ENCODE measurements at regions of chr21 and their contacts with region 1.

Region 1: DNA sequence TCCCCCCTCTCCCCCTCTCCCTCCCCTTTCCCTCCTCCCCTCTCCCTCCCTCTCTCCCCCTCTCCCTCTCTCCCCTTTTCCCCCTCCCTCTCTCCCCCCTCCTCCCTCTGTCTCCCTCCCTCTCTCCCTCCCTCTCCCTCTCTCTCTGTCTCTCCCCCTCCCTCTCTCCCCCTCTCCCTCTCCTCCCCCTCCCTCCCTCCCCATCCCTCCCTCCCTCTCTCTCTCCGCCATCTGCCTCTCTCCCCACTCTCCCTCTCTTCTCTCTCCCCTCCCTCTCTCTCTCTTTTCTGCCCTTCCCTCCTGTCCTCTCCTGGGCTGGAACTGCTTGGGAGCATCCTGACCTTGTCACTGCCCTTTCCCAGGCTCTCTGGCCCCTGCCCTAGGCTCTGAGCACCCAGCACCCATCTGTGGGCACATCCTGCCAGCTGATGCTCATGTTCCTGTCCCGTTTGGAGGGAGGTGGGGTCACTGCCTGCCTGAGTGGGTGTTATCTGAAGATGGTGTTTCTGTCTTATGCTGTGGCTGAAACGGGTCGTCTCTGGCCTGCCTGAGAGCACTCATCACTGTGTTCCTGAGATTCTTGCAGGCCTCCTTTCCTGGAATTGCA is 10.8 kb downstream of the FTCD start:
- DNase-seq: no peak
- H3K4me3 ChIP-seq: no peak overlapping the region
- H3K27ac ChIP-seq: no peak overlapping the region
- H3K4me1 ChIP-seq: peaks cover 4% of the 10 kb centered on the region
- H3K27me3 ChIP-seq: no peaks in the 10 kb centered on the region
- CTCF ChIP-seq: no peak

Region 2: DNA sequence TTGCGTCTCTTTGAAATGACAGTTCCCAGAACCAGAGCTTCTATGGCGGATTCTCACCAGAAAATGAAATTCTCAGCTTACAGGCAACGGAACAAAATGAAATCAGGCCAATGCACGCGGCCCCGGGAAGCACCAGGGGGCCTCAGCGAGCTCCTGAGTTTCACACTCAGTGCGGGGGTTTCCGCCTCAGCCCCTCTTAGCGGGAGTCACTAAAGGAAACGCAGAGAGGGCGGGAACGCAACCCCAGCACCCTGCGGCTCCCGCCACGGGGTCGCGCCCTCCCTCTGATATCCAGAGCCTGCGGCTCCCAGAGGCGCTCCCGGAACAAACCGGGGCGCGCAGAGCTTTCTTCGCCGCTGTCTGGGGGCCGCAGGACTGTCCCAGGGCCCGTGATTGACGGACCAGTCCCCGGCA is 170.9 kb before region 1 on chr21:
- CTCF ChIA-PET with region 1: no interaction called
- dilution Hi-C with region 1: no loop called
- in situ Hi-C with region 1: no loop called
- intact Hi-C with region 1: loop called (anchors 1 kb)
- DNase-seq: peak; percentile 24
- H3K4me3 ChIP-seq: peak overlapping the region; percentile 31 to 47 (median 46)
- H3K27ac ChIP-seq: no peak overlapping the region
- H3K4me1 ChIP-seq: peaks cover 26% of the 10 kb centered on the region
- H3K27me3 ChIP-seq: peaks cover 2% of the 10 kb centered on the region
- CTCF ChIP-seq: peak; percentile 63 to 75

Region 3: GRCh38 chr21:46188359-46189109 is 44.0 kb after region 1 on chr21:
- CTCF ChIA-PET with region 1: no interaction called
- dilution Hi-C with region 1: no loop called
- in situ Hi-C with region 1: no loop called
- intact Hi-C with region 1: no loop called
- DNase-seq: peak; percentile 50
- H3K4me3 ChIP-seq: no peak overlapping the region
- H3K27ac ChIP-seq: peak overlapping the region; percentile 54
- H3K4me1 ChIP-seq: peaks cover 34% of the 10 kb centered on the region
- H3K27me3 ChIP-seq: no peaks in the 10 kb centered on the region
- CTCF ChIP-seq: no peak

Region 4: GRCh38 chr21:46228345-46229051 is 83.9 kb after region 1 on chr21 and contains the start of gene LSS:
- CTCF ChIA-PET with region 1: interaction called, 4 read pairs
- dilution Hi-C with region 1: no loop called
- in situ Hi-C with region 1: no loop called
- intact Hi-C with region 1: loop called (anchors 1 kb)
- DNase-seq: peak; percentile 96
- H3K4me3 ChIP-seq: peak within 1 kb of the TSS; percentile 93 to 94 (median 94)
- H3K27ac ChIP-seq: peak within 1 kb of the TSS; percentile 87
- H3K4me1 ChIP-seq: peaks cover 25% of the 10 kb centered on the region
- H3K27me3 ChIP-seq: no peaks in the 10 kb centered on the region
- CTCF ChIP-seq: no peak
- total RNA-seq, gene LSS: 69.2 to 126 TPM

Region 5: DNA sequence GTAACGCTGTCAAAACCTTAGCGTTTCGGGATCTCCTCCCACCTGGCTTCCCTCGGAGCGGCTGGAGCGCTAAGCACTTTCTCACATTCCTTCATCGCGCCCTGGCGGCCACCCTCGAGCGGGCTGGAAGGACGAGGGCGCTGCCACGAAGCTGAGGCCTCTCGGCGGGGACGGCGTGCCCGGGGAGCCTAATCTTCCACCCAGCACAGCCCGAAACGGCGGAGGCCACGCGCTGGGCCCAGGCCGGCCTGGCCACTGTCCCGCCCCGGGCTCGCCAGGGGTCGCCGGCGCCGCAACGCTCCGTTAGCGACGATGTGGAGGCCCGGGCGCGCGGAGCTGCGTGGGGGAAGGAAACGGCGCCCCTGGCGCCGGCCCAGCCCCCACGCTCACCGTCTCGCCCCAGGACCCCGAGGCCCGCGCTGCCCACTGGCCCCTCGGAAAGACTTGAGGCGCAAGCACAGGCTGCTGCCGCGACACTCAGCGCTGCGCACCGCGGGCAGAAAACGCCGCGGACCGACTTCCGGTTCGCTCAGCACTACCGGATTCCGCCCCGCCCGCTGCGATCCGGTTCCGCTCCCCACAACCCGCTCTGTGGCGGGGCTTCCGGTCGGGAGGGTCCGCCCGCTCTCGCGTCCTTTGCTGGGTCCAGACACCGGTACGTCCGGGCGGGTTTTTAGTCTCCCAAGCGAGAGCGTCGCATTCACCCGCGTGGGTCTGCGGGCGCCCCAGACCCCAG is 141.4 kb after region 1 on chr21 and contains the start of gene YBEY:
- CTCF ChIA-PET with region 1: no interaction called
- dilution Hi-C with region 1: no loop called
- in situ Hi-C with region 1: no loop called
- intact Hi-C with region 1: loop called (anchors 5 kb)
- DNase-seq: peak; percentile 91
- H3K4me3 ChIP-seq: peak within 1 kb of the TSS; percentile 73 to 90 (median 76)
- H3K27ac ChIP-seq: peak within 1 kb of the TSS; percentile 70
- H3K4me1 ChIP-seq: peaks cover 25% of the 10 kb centered on the region
- H3K27me3 ChIP-seq: no peaks in the 10 kb centered on the region
- CTCF ChIP-seq: peak; percentile 13 to 48
- total RNA-seq, gene YBEY: 9.0 to 12.3 TPM

Region 6: DNA sequence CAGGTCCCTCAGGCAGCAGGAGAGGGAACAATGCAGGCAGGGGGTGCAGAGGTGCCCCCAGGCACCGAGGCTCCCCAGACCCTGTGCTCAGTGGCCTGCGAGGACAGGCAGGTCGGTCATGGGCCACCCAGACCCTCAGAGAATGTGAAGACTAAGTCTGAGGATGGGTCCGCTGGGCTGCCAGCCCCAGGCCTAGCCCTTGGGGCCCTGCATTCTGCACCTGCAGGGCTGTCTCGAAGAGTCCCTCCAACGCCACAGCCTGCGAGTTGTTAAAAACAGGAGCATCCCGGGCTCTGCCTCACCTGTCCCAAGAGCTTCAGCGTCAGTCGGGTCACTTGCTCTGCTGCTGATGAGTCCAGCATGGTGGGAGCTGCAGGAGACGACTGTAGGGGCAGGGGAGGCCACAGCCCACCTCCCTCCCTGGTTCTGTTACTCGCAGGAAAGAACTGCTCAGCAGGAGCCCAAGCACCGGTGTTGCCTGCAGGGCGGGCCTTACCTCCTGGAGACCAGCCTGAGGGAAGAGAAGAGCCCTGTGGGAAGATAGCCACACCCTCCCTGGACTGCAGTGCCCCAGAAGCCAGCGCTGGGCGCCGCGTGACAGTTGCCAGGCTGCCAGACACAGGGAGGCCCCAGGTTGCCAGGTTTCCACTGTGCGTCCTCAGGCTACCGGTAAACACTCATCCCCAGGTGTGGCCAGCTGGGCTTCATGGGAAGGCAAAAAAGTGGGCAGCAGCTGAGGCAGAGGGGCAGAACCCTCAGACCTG is 173.3 kb after region 1 on chr21:
- CTCF ChIA-PET with region 1: no interaction called
- dilution Hi-C with region 1: no loop called
- in situ Hi-C with region 1: no loop called
- intact Hi-C with region 1: no loop called
- DNase-seq: no peak
- H3K4me3 ChIP-seq: no peak overlapping the region
- H3K27ac ChIP-seq: no peak overlapping the region
- H3K4me1 ChIP-seq: peaks cover 13% of the 10 kb centered on the region
- H3K27me3 ChIP-seq: no peaks in the 10 kb centered on the region
- CTCF ChIP-seq: no peak

Region 7: GRCh38 chr21:46437096-46437498 is 292.5 kb after region 1 on chr21:
- CTCF ChIA-PET with region 1: interaction called, 12 read pairs
- dilution Hi-C with region 1: no loop called
- in situ Hi-C with region 1: no loop called
- intact Hi-C with region 1: no loop called
- DNase-seq: no peak
- H3K4me3 ChIP-seq: no peak overlapping the region
- H3K27ac ChIP-seq: no peak overlapping the region
- H3K4me1 ChIP-seq: no peaks in the 10 kb centered on the region
- H3K27me3 ChIP-seq: no peaks in the 10 kb centered on the region
- CTCF ChIP-seq: no peak

Region 8: DNA sequence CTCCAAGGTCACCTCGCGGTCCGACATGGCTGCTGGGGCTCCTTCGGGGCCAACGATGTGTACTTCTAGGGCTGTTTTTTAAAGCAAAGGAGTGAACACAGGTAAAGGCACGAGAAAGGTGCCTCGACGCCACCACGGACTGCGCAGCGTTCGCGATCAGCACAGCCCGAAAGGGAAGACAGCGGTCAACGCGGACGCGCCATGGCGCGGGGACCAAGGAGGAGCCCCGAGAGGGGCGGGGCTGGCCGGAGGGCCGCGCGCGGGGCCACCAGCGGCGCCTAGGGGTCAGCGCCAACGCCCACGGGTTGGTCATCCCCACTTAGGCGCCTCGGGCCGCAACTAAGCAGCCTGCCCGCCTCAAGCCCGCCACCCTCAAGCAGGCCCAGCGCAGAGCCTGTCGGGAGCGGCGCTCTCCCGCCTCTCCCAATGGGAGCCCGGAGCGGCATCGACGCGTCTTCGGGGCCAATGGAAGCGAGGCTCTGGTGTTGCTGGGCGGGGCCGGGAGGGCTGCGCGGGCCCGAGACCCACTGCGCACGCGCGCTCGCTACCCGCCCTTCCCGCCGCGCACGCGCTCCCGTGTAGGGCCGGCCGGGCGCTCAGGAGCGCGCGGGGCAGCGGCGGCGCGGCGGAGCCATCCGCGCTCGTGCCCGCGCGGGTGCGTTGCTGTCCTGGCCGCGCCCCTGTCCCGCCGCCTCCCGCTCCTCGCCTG is 313.9 kb after region 1 on chr21 and contains the start of gene DIP2A:
- CTCF ChIA-PET with region 1: interaction called, 6 read pairs
- dilution Hi-C with region 1: no loop called
- in situ Hi-C with region 1: no loop called
- intact Hi-C with region 1: loop called (anchors 5 kb)
- DNase-seq: peak; percentile 97
- H3K4me3 ChIP-seq: peak within 1 kb of the TSS; percentile 80 to 91 (median 84)
- H3K27ac ChIP-seq: peak within 1 kb of the TSS; percentile 96
- H3K4me1 ChIP-seq: peaks cover 37% of the 10 kb centered on the region
- H3K27me3 ChIP-seq: no peaks in the 10 kb centered on the region
- CTCF ChIP-seq: no peak
- total RNA-seq, gene DIP2A: 49.5 to 51.3 TPM

Measured in mammary epithelial cell (primary cell).